ENCODE measurements at regions of chr3 and their contacts with region 1.

Region 1: GRCh38 chr3:40096661-40097111 is 212.8 kb upstream of the EIF1B start:
- DNase-seq: no peak
- ATAC-seq: no peak
- H3K4me3 ChIP-seq: no peak overlapping the region
- H3K4me3 Mint-ChIP-seq: no peak overlapping the region
- H3K27ac ChIP-seq: no peak overlapping the region
- H3K27ac Mint-ChIP-seq: no peak overlapping the region
- H3K4me1 ChIP-seq: no peaks in the 10 kb centered on the region
- H3K4me1 Mint-ChIP-seq: no peaks in the 10 kb centered on the region
- H3K27me3 ChIP-seq: no peaks in the 10 kb centered on the region
- H3K27me3 Mint-ChIP-seq: peaks cover 13% of the 10 kb centered on the region
- CTCF ChIP-seq: no peak

Region 2: DNA sequence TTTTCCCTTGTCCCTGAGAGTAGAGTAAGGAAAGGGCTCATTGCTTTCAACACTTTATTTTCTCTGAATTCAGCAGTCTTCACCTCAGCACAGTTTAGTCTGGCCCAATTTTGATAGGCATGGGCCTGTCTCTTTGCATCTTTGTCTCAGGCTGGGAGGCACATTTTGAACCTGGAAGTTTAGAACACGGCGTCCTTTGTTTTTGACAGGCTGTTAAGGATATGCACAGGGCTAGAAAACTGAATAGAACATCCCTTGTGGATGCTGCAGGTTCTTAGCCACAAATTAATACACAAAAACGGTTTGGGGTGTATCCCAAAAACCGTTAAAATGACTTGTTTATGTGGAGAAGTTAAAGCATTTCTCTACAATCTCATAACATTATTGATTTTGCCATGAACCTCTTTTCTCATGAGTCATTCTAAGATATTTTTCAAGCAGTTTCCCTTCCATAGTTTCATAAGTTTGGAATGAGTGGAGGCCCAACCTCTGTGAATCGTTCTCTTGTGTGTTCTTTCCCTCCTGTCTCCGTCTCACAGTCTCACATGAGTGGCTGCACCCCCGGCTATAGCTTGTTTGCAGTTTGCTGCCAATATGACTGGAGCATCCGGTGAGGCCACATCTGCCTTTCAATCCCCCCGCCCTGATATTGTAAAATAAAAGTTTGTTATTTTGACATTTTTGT is 19.9 kb after region 1 on chr3:
- CTCF ChIA-PET with region 1: no interaction called
- POLR2A ChIA-PET with region 1: no interaction called
- intact Hi-C with region 1: loop called in 1 of 2 experiments (anchors 1 kb)
- DNase-seq: no peak
- ATAC-seq: no peak
- H3K4me3 ChIP-seq: no peak overlapping the region
- H3K4me3 Mint-ChIP-seq: no peak overlapping the region
- H3K27ac ChIP-seq: no peak overlapping the region
- H3K27ac Mint-ChIP-seq: no peak overlapping the region
- H3K4me1 ChIP-seq: no peaks in the 10 kb centered on the region
- H3K4me1 Mint-ChIP-seq: no peaks in the 10 kb centered on the region
- H3K27me3 ChIP-seq: no peaks in the 10 kb centered on the region
- H3K27me3 Mint-ChIP-seq: no peaks in the 10 kb centered on the region
- CTCF ChIP-seq: no peak

Measured in CD8-positive, alpha-beta T cell (primary cell).